Breast epithelium (tissue), 4 donors: ENCODE measurements at regions of chr2 and their contacts with region 1.

Region 1: DNA sequence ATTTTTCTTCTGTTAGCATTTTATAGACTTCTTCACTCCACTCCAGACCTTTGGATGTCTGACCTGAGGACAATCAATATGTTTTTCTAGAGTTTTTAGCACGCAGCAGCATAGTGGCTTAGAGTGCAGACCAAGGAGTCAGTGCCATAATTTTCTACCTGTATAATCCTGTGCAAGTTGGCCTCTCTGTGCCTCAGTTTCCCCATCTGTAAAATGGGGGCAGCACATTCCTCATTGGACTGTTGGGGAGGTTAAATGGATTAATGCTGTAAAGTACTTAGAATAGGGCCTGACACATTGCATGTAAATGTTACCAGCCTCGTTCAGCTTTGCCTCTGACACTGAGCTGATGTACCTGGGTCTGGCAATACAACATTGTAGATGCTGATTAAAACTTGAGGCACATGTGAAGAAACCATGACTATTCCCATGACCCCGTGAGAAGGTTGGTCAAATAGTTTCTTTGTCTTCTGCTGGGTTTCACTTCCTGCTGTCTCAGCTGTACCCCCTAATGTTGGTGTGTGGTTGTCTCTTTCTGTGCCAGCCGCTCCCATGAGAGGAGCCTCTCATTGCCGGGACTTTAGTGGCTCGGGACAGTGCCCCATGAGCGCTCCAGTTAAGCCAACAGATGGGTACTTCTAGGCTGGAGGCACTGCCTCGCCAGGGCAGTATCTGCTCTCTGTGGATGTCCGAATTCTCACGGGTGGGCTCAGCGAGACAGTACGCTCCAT is 125.3 kb downstream of the SH3RF3 start:
- DNase-seq: no peak
- H3K4me3 ChIP-seq: no peak overlapping the region
- H3K27ac ChIP-seq: no peak overlapping the region
- H3K4me1 ChIP-seq: no peaks in the 10 kb centered on the region
- H3K27me3 ChIP-seq: no peaks in the 10 kb centered on the region
- CTCF ChIP-seq: no peak
- POLR2A ChIP-seq: no peak

Region 2: DNA sequence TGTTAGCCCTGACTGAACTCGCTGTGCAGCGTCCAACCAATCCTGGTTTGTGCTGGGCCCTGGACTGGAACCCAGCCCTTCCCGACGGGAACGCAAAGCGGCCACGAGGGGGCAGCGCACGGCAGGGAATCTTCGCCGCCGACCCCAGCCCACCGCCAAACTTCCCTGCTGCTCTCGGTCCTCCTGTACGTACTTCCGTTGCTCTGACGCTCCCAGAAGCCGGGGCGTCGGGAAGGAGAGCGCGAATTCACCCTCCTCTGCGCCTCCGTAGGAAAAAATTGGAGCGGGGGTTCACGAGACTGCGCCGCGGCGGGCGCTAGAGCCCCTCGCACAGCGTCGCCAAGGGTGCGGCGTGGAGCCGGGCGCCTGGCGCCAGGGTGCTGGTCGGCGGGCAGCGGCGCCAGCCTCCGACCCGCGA is 126.3 kb before region 1 on chr2:
- intact Hi-C with region 1: loop called (anchors 10 kb)
- DNase-seq: peak in 1 of 2 donors; percentile 44
- H3K4me3 ChIP-seq: peak overlapping the region; percentile 68 to 79 (median 75)
- H3K27ac ChIP-seq: peak overlapping the region; percentile 41 to 42
- H3K4me1 ChIP-seq: peaks cover 0 to 4% of the 10 kb centered on the region in 2 donors
- H3K27me3 ChIP-seq: peaks cover 0 to 4% of the 10 kb centered on the region in 2 donors
- CTCF ChIP-seq: peak; percentile 80 to 91 (median 85)
- POLR2A ChIP-seq: no peak

Region 3: GRCh38 chr2:109225170-109225782 is 29.1 kb before region 1 on chr2:
- intact Hi-C with region 1: loop called (anchors 2 kb)
- DNase-seq: peak in 1 of 2 donors; percentile 6
- H3K4me3 ChIP-seq: no peak overlapping the region
- H3K27ac ChIP-seq: no peak overlapping the region
- H3K4me1 ChIP-seq: no peaks in the 10 kb centered on the region
- H3K27me3 ChIP-seq: no peaks in the 10 kb centered on the region
- CTCF ChIP-seq: no peak
- POLR2A ChIP-seq: no peak